Activated T-helper 1 cell treated with anti-CD3 and anti-CD28 coated beads, Interleukin-12 subunit alpha, Interleukin-12 subunit beta, Interleukin-2, Interleukin-4 antibody, amounts not matched to agents 30 ng/mL and 10 ng/mL and 1 ng/mL, durations not matched to agents 14 hours and 24 hours and 36 hours (primary cell): ENCODE measurements at regions of chr9 and their contacts with region 1.

Region 1: GRCh38 chr9:4984621-4985385 is at the start of gene JAK2:
- DNase-seq: peak; percentile 87
- H3K4me3 Mint-ChIP-seq: peak within 1 kb of the TSS; percentile 92
- H3K27ac Mint-ChIP-seq: peak within 1 kb of the TSS; percentile 96
- H3K4me1 Mint-ChIP-seq: peaks cover 54% of the 10 kb centered on the region
- H3K27me3 Mint-ChIP-seq: no peaks in the 10 kb centered on the region
- total RNA-seq, gene JAK2: 30.8 and 32.0 TPM in 2 replicates

Region 2: GRCh38 chr9:4679268-4680172 is 305.3 kb before region 1 on chr9 and contains the start of gene CDC37L1:
- intact Hi-C with region 1: loop called (anchors 2 kb)
- DNase-seq: peak; percentile 98
- H3K4me3 Mint-ChIP-seq: no peak within 1 kb of the TSS
- H3K27ac Mint-ChIP-seq: no peak within 1 kb of the TSS
- H3K4me1 Mint-ChIP-seq: peaks cover 7% of the 10 kb centered on the region
- H3K27me3 Mint-ChIP-seq: no peaks in the 10 kb centered on the region
- total RNA-seq, gene CDC37L1: 11.1 and 11.3 TPM in 2 replicates

Region 3: GRCh38 chr9:4832786-4833579 is 151.8 kb before region 1 on chr9:
- intact Hi-C with region 1: loop called (anchors 1 kb)
- DNase-seq: peak; percentile 48
- H3K4me3 Mint-ChIP-seq: peak overlapping the region; percentile 53
- H3K27ac Mint-ChIP-seq: peak overlapping the region; percentile 96
- H3K4me1 Mint-ChIP-seq: peaks cover 60% of the 10 kb centered on the region
- H3K27me3 Mint-ChIP-seq: no peaks in the 10 kb centered on the region

Region 4: DNA sequence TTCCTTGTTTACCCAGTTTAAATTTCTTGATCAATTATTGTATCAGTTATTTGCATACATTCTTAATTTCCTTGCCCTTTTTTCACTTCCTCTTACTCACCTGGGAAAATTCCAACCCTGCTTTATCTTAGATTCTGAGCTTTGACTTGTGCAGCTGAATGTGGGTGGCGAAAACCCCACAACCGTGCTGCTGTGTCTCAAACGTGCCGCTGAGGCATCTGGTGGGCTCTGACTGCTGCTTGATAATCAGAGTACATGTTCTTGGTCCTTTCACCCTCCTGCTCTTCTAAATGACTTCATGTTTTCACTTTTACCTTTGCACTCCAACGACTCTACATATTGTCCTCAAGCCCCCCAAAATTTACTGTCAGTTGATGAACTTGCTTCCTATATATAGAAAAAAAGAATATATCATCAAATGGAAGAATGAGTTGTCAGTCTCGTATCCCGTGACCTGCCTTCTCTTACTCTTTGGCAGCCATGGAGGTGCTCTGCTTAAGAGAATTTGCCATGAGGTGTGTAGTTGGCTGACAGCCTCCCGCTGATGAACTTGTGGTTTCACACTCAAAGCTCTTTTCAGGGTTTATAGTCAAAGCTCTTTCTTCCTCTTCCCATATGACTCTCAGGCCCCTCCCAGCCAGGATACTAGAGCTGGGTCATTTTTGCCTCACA is 13.7 kb before region 1 on chr9:
- intact Hi-C with region 1: loop called (anchors 1 kb)
- DNase-seq: peak; percentile 62
- H3K4me3 Mint-ChIP-seq: no peak overlapping the region
- H3K27ac Mint-ChIP-seq: no peak overlapping the region
- H3K4me1 Mint-ChIP-seq: peaks cover 14% of the 10 kb centered on the region
- H3K27me3 Mint-ChIP-seq: no peaks in the 10 kb centered on the region

Region 5: DNA sequence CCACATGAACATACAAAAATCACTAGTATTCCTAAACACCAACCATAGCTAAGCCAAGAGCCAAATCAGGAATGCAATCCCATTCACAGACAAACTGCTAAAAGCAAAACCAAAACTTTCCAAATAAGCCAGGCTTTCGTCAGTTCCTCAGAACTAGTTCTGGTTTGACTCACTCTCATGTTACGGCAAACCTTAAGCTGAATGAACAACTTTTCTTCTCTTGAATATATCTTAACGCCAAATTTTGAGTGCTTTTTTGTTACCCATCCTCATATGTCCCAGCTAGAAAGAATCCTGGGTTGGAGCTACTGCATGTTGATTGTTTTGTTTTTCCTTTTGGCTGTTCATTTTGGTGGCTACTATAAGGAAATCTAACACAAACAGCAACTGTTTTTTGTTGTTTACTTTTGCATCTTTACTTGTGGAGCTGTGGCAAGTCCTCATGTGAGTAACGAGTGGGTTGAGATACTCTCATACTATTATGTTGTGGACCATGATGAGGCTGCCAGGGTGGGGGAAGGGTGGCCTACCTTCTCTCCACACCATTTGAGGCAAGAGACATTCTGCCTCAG is 525.6 kb after region 1 on chr9 and contains the start of gene PDCD1LG2:
- intact Hi-C with region 1: loop called (anchors 5 kb)
- DNase-seq: peak; percentile 41
- H3K4me3 Mint-ChIP-seq: peak within 1 kb of the TSS; percentile 82
- H3K27ac Mint-ChIP-seq: peak within 1 kb of the TSS; percentile 96
- H3K4me1 Mint-ChIP-seq: peaks cover 68% of the 10 kb centered on the region
- H3K27me3 Mint-ChIP-seq: no peaks in the 10 kb centered on the region
- total RNA-seq, gene PDCD1LG2: 1.1 and 1.4 TPM in 2 replicates

Region 6: GRCh38 chr9:5843794-5844504 is 859.1 kb after region 1 on chr9:
- intact Hi-C with region 1: loop called (anchors 2 kb)
- DNase-seq: no peak
- H3K4me3 Mint-ChIP-seq: peak overlapping the region; percentile 69
- H3K27ac Mint-ChIP-seq: peak overlapping the region; percentile 88
- H3K4me1 Mint-ChIP-seq: peaks cover 88% of the 10 kb centered on the region
- H3K27me3 Mint-ChIP-seq: no peaks in the 10 kb centered on the region